ENCODE measurements at regions of chr15 and their contacts with region 1.

Region 1: GRCh38 chr15:81274931-81275707 is 48.8 kb downstream of the STARD5 start:
- DNase-seq: peak; percentile 83

Region 2: DNA sequence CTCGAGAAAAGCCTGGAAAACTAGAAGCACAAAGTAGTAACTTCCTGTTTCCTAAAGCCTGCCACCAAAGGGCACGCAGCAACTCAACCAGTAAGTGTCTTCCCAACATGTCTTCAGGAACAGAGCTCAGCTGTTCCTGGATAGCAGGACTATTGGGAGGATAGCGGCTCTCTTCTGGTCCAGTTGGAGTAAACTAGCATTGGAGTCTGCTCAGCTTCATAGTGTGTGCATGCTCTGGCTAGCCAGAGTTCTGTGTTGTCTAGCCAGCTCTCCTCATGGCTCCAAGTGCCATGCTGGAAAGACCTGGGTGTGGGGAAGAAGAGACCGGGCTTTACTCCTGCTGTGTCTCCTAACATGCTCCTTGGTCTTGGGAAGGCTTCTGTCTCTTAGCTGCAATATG is 15.3 kb before region 1 on chr15:
- CTCF ChIA-PET with region 1: no interaction called
- POLR2A ChIA-PET with region 1: no interaction called
- DNase-seq: no peak

Region 3: GRCh38 chr15:81400640-81401236 is 125.6 kb after region 1 on chr15:
- CTCF ChIA-PET with region 1: interaction called, 32 read pairs
- POLR2A ChIA-PET with region 1: no interaction called
- DNase-seq: peak; percentile 58

Measured in HEK293T (cell line).